ENCODE measurements at regions of chr10 and their contacts with region 1.

Region 1: DNA sequence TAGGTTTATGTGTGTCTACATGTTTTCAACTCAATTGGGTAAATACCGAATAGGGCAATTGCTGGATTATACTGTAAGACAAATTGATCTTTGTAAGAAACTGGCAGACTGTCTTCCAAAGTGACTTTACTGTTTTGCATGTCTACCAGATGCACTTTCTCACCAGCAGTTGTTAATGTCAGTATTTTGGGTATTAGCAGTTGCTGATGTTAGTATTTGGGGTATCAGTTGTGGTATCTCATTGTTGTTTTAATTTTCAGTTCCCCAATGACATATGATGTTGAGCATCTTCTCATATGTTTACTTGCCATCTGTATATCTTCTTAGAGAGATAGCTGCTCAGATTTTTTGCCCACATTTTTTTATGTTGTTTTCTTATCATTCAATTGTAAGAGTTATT is 10.6 kb downstream of the PDE6C start:
- DNase-seq: no peak
- ATAC-seq: no peak
- H3K4me3 ChIP-seq: no peak overlapping the region
- H3K27ac ChIP-seq: no peak overlapping the region
- H3K4me1 ChIP-seq: no peaks in the 10 kb centered on the region
- H3K27me3 ChIP-seq: peaks cover 13% of the 10 kb centered on the region; the same call in 1 of the 2 replicates
- CTCF ChIP-seq: no peak

Region 2: GRCh38 chr10:93554760-93555432 is 68.0 kb before region 1 on chr10:
- CTCF ChIA-PET with region 1: no interaction called
- POLR2A ChIA-PET with region 1: no interaction called
- in situ Hi-C with region 1: no loop called
- intact Hi-C with region 1: no loop called
- DNase-seq: peak; percentile 53
- ATAC-seq: peak; percentile 96
- H3K4me3 ChIP-seq: no peak overlapping the region
- H3K27ac ChIP-seq: no peak overlapping the region
- H3K4me1 ChIP-seq: no peaks in the 10 kb centered on the region
- H3K27me3 ChIP-seq: no peaks in the 10 kb centered on the region
- CTCF ChIP-seq: peak; percentile 91

Region 3: DNA sequence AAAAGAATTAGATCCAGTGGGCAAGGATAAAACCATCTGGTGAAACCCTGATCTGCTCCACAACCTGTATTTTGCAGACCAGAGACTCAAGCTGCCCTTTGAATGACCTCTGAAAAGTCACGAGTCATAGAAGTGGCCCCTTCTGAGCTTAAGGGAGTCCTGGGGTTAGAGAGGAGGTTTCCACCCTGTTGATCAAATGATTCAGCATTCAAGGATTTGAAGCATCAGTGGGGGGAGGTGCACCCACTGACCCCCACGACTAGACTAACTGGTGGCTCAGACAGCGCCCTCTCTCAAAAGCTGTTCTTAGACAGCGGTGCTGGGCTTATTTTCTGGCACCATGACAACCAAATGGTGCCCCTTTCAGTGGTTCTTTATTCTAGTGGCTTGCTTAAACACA is 415.1 kb after region 1 on chr10:
- CTCF ChIA-PET with region 1: no interaction called
- POLR2A ChIA-PET with region 1: no interaction called
- in situ Hi-C with region 1: no loop called
- intact Hi-C with region 1: no loop called
- DNase-seq: no peak
- ATAC-seq: peak; percentile 71
- H3K4me3 ChIP-seq: no peak overlapping the region
- H3K27ac ChIP-seq: peak overlapping the region; percentile 27; the same call in 1 of the 2 replicates
- H3K4me1 ChIP-seq: peaks cover 30% of the 10 kb centered on the region
- H3K27me3 ChIP-seq: no peaks in the 10 kb centered on the region
- CTCF ChIP-seq: no peak; the same call in 1 of the 2 replicates

Region 4: GRCh38 chr10:94451883-94452519 is 829.1 kb after region 1 on chr10:
- CTCF ChIA-PET with region 1: no interaction called
- POLR2A ChIA-PET with region 1: interaction called, 12 read pairs
- in situ Hi-C with region 1: no loop called
- intact Hi-C with region 1: no loop called
- DNase-seq: no peak
- ATAC-seq: no peak
- H3K4me3 ChIP-seq: no peak overlapping the region
- H3K27ac ChIP-seq: no peak overlapping the region
- H3K4me1 ChIP-seq: no peaks in the 10 kb centered on the region
- H3K27me3 ChIP-seq: no peaks in the 10 kb centered on the region
- CTCF ChIP-seq: no peak